ENCODE measurements at regions of chr15 and their contacts with region 1.

Region 1: GRCh38 chr15:77821188-77821958 is 188.7 kb upstream of the LINGO1 start:
- DNase-seq: peak; percentile 77 to 93
- ATAC-seq: peak; percentile 76 to 92
- H3K4me3 ChIP-seq: no peak overlapping the region
- H3K27ac ChIP-seq: no peak overlapping the region
- H3K4me1 ChIP-seq: peaks cover 8% of the 10 kb centered on the region; the same call in 1 of the 3 replicates
- CTCF ChIP-seq: peak; percentile 81
- EP300 ChIP-seq: no peak
- POLR2A ChIP-seq: no peak
- RAD21 ChIP-seq: peak; percentile 90 to 95

Region 2: DNA sequence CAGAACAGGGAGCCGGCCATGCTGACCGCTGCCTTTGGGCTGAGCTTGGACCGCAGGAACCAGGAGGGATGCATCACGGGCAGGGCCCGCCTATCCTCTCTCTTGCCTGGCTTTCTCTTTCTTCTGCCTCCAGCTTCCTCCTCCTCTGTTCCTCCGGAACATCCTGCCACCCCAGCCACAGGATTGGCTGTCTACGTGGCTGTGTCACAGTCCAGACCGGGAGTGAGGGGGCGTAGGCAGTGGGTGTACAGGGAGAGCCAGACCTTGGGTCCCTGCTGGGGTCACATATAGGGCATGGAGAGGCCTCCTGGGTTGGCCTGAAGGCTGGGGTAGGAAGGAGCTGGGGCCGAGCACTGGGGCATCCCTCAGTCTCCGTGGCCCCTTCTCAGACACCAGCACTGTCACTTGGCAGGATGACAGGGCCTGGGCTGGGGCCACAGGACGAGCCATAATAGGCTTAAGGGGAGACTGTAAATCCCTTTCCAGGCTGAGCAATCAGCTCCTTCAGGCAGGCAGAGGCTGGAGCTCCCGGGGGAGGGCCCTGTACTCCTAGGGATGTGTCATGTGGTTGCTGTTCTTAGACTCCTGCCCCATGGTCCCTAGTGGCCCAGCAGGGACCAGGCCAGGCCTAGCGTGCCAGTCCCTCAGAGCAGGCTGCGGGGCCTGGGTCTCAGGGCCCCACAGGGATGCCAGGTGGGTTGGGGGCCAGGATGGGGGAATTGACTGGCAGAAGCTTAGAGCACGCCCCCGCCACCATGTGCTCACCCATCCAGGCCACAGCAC is 214.1 kb before region 1 on chr15:
- CTCF ChIA-PET with region 1: interaction called, 26 read pairs
- POLR2A ChIA-PET with region 1: no interaction called
- DNase-seq: no peak
- ATAC-seq: peak; percentile 16 to 46; a peak in 3 of 6 replicates
- H3K4me3 ChIP-seq: no peak overlapping the region
- H3K27ac ChIP-seq: no peak overlapping the region
- H3K4me1 ChIP-seq: peaks cover 8% of the 10 kb centered on the region; the same call in 2 of the 3 replicates
- CTCF ChIP-seq: no peak
- EP300 ChIP-seq: no peak
- POLR2A ChIP-seq: no peak
- RAD21 ChIP-seq: no peak

Region 3: GRCh38 chr15:77650265-77650664 is 171.1 kb before region 1 on chr15:
- CTCF ChIA-PET with region 1: interaction called, 72 read pairs
- POLR2A ChIA-PET with region 1: no interaction called
- DNase-seq: peak; percentile 41 to 46
- ATAC-seq: peak; percentile 41 to 79; a peak in 3 of 6 replicates
- H3K4me3 ChIP-seq: no peak overlapping the region
- H3K27ac ChIP-seq: no peak overlapping the region
- H3K4me1 ChIP-seq: no peaks in the 10 kb centered on the region
- CTCF ChIP-seq: peak; percentile 44
- EP300 ChIP-seq: no peak
- POLR2A ChIP-seq: no peak
- RAD21 ChIP-seq: peak; percentile 21 to 22; a peak in 1 of 5 replicates

Region 4: DNA sequence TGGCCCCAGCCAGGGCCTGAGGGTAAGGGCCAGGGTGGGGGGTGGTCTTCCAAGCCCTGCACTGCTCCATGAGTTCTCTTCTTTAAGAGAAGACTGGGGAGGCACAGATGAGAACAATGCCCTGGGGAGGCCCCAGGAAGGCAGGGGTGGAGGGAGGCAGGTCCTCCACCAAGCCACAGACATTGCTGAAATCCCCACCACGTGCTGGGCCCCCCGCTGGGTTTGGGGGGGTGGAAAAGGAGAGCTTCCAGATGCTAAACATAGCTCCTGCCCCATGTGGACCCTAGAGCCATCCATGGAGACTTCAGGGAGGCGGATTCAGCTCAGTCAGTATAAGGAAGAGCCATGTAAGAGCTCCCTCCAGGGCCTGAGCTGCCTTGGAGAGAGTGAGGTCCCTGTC is 30.9 kb before region 1 on chr15:
- CTCF ChIA-PET with region 1: interaction called, 28 read pairs
- POLR2A ChIA-PET with region 1: no interaction called
- DNase-seq: no peak
- ATAC-seq: no peak
- H3K4me3 ChIP-seq: no peak overlapping the region
- H3K27ac ChIP-seq: no peak overlapping the region
- H3K4me1 ChIP-seq: no peaks in the 10 kb centered on the region
- CTCF ChIP-seq: no peak
- EP300 ChIP-seq: no peak
- POLR2A ChIP-seq: no peak
- RAD21 ChIP-seq: no peak

Region 5: GRCh38 chr15:77836121-77836692 is 14.8 kb after region 1 on chr15:
- CTCF ChIA-PET with region 1: interaction called, 122 read pairs
- POLR2A ChIA-PET with region 1: no interaction called
- DNase-seq: peak; percentile 33 to 72
- ATAC-seq: peak in 1 of 2 experiments; percentile 76; a peak in 3 of 6 replicates
- H3K4me3 ChIP-seq: no peak overlapping the region
- H3K27ac ChIP-seq: no peak overlapping the region
- H3K4me1 ChIP-seq: peaks cover 8% of the 10 kb centered on the region
- CTCF ChIP-seq: no peak
- EP300 ChIP-seq: no peak
- POLR2A ChIP-seq: no peak
- RAD21 ChIP-seq: no peak

Region 6: DNA sequence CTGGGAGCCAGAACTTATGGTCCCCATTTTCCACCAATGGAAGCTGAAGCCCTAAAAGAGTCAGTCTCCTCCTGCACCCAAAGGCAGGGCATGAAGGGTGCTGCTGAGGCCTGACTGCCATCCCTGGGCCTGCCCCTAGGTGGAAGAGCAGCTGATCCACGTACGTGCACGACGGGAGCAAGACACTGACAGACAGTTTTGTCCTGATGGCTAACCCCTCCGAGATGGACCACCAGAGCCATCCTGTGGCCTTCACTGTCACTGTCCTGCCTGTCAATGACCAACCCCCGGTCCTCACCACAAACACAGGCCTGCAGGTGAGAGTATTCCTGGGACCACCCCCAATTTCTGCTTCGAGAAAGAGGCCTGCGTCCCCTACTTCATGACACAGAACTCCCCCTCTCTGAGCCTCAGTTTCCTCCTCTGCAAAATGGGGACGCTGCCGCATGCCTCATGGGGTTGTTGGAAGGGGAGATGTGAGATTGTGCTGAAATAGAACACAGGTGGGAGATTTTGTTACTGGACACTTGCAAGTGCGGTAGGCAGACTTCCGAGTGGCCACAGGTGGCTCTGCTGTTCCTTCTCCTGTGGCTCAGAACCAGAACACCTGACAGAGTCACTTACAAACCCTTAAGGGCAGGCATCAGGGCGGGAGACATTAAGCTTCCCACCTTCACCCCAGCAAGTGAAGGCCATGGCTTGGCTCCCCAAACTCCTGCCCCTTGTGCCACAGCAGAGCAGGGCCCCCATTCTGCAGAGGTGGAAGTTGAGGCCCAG is 80.8 kb after region 1 on chr15:
- CTCF ChIA-PET with region 1: no interaction called
- POLR2A ChIA-PET with region 1: no interaction called
- DNase-seq: peak; percentile 32 to 49
- ATAC-seq: peak; percentile 53 to 76; a peak in 3 of 6 replicates
- H3K4me3 ChIP-seq: no peak overlapping the region
- H3K27ac ChIP-seq: no peak overlapping the region
- H3K4me1 ChIP-seq: no peaks in the 10 kb centered on the region
- CTCF ChIP-seq: no peak
- EP300 ChIP-seq: no peak
- POLR2A ChIP-seq: no peak
- RAD21 ChIP-seq: no peak

Measured in A549 (cell line).